Aorta (tissue), 5 donors: ENCODE measurements at regions of chr13 and their contacts with region 1.

Region 1: DNA sequence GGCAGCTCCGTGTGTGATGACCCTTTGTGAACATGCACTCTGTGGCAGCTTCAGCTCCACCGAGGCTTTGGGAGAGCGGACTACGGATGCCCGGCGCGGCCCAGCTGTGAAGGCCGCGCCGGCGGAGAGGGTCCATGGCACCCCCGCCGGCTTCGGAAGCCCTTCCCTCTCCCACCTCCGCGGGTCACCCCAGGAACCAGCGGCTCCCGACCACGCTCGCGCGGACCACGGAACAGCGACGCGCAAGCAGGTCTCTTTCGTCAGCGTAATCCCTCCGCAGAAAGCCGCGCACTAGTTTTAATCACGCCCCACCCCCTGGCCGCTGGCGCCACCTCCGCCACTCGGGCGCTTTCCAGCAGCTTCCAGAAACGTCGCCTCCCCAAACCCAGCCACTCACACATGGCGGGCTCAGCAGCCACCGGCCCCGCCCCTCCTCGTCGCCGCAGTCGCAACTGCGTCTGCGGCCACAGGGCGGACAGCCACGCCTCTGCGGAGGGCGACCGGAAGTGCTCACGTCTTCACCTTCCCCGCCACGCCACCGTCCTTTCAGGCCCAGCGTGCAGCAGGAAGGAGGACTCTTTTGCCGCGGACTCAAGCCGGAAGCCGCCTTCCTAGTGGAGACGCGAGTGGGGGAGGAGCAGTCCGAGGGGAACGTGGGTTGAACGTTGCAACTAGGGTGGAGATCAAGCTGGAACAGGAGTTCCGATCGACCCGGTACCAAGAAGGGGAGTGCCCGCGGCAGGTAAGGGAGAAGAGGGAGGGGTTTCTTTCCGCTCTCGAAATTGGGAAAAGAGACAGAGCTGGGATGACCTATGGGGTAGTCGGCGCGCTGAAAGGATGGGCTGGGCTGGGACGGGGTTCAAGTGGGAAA is at the start of gene USPL1:
- DNase-seq: peak; percentile 99
- ATAC-seq: peak; percentile 98
- H3K4me3 ChIP-seq: peak within 1 kb of the TSS; percentile 65 to 86
- H3K27ac ChIP-seq: peak within 1 kb of the TSS; percentile 74 to 99
- H3K4me1 ChIP-seq: peaks cover 0 to 4% of the 10 kb centered on the region in 2 donors
- H3K27me3 ChIP-seq: no peaks in the 10 kb centered on the region
- total RNA-seq, gene USPL1: 15.6 to 18.8 TPM

Region 2: GRCh38 chr13:30132623-30133553 is 484.7 kb before region 1 on chr13:
- intact Hi-C with region 1: loop called in 1 of 2 experiments (anchors 10 kb)
- DNase-seq: peak; percentile 98 to 100
- ATAC-seq: peak; percentile 94
- H3K4me3 ChIP-seq: no peak overlapping the region
- H3K27ac ChIP-seq: no peak overlapping the region
- H3K4me1 ChIP-seq: no peaks in the 10 kb centered on the region
- H3K27me3 ChIP-seq: no peaks in the 10 kb centered on the region

Region 3: DNA sequence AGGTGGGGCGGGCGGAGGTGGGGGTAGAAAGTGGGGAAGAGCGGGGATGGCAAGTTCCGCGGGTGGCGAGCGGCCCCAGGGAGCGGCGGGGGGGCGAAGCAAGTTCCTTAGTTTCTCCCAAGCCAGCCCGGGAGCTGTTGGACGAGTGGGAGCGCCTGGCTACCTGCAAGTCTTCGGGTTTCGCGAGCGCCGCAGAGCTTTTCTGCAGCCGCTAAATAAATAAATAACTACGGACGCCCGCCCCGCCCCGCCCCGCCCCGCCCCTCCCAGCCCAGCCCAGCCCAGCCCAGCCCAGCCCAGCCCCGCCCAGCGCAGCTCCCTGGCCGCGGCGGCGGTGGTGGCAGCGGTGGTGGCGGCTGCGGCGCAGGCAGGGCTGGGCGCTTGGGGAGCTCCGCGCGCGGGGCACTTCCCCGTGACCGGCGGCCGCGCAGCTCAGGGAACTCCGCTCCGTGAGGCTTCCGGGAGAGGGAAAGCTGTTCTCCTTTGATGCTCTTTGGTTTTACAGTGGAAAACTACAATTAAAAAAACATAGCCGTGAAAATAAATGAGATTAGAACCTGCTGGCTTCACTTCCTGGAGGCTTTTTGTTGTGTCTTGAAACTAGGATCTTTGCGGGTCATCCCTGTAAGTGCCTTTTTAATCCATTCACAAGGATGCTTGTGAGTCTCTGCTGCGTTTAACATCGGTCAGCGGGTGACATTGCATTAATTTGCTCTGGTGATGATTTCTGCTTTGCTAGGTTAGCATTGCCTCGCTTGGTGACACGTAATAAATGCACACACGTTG is 195.3 kb before region 1 on chr13 and contains the start of gene UBE2L5:
- intact Hi-C with region 1: loop called in 1 of 2 experiments (anchors 5 kb)
- DNase-seq: peak; percentile 85 to 92
- ATAC-seq: peak; percentile 92
- H3K4me3 ChIP-seq: peak within 1 kb of the TSS; percentile 73 to 92
- H3K27ac ChIP-seq: peak within 1 kb of the TSS; percentile 94 to 95
- H3K4me1 ChIP-seq: no peaks in the 10 kb centered on the region
- H3K27me3 ChIP-seq: no peaks in the 10 kb centered on the region
- total RNA-seq, gene UBE2L5: 1.7 TPM in 1 of 2 donors, not detected in the other

Region 4: GRCh38 chr13:30673669-30674521 is 56.3 kb after region 1 on chr13:
- intact Hi-C with region 1: loop called (anchors 2 to 5 kb)
- DNase-seq: peak; percentile 94 to 96
- ATAC-seq: peak; percentile 96
- H3K4me3 ChIP-seq: peak overlapping the region; percentile 0 to 16
- H3K27ac ChIP-seq: peak overlapping the region in 1 of 2 donors; percentile 62
- H3K4me1 ChIP-seq: no peaks in the 10 kb centered on the region
- H3K27me3 ChIP-seq: no peaks in the 10 kb centered on the region

Region 5: DNA sequence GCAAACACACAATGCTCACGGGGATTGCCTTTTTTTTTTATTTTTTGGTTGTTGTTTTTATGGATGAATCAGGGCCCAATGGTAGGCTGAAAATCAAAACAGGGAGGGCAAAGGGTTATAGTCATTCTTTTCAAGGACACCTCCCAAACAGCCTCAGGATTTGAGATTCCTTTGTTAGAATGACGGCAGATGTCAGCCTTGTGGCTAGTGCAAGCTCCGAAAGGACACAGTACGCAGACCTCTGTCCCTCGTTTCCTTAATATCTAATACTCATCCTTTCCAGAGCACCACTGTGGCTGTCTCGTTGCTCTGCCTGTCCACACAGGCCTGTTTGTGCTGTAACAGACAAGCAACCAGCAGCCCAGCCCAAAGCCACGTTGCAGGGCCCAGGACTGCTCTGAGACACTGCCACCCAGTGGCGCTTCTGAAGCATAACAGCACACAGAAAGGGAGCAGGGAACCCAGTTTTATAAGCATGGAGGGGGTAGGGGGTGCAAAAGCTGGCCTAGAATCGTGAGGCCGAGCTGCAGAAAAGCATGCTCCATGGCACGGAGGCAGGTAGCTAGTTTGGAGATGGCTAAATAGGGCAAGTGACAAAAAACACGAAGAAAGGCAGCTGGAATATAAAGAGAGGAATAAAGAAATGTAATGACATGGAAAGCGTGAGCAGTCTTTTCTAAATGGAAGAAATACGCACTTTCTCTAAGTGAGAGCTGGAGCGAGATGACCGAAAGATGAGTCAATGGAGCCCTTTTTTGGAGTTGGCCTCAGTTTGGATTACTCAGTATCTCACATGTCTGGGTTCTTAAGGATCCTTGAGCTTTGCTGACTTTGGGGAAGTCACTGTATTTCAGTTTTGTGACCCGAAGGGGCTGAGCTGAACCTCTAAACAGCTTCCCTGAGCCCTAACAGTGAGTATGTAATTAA is 247.8 kb after region 1 on chr13:
- intact Hi-C with region 1: loop called in 1 of 2 experiments (anchors 5 kb)
- DNase-seq: peak; percentile 87 to 89
- ATAC-seq: peak; percentile 93
- H3K4me3 ChIP-seq: no peak overlapping the region
- H3K27ac ChIP-seq: peak overlapping the region; percentile 56 to 81
- H3K4me1 ChIP-seq: peaks cover 2 to 3% of the 10 kb centered on the region in 2 donors
- H3K27me3 ChIP-seq: no peaks in the 10 kb centered on the region

Region 6: GRCh38 chr13:31161828-31162590 is 544.5 kb after region 1 on chr13 and contains the start of gene HSPH1:
- intact Hi-C with region 1: loop called in 1 of 2 experiments (anchors 2 kb)
- DNase-seq: peak; percentile 99 to 100
- ATAC-seq: peak; percentile 99
- H3K4me3 ChIP-seq: peak within 1 kb of the TSS; percentile 60 to 68
- H3K27ac ChIP-seq: peak within 1 kb of the TSS; percentile 35 to 87
- H3K4me1 ChIP-seq: no peaks in the 10 kb centered on the region
- H3K27me3 ChIP-seq: no peaks in the 10 kb centered on the region
- total RNA-seq, gene HSPH1: 50.6 to 81.1 TPM